Activated CD4-positive, alpha-beta T cell treated with anti-CD3 and anti-CD28 coated beads, Interleukin-2, amount 10 ng/mL, durations not matched to agents 24 days and 14 days (primary cell): ENCODE measurements at regions of chr18 and their contacts with region 1.

Region 1: GRCh38 chr18:54269893-54270844 is 852 bp downstream of the POLI start:
- DNase-seq: peak; percentile 89
- H3K4me3 Mint-ChIP-seq: peak overlapping the region; percentile 85
- H3K27ac Mint-ChIP-seq: peak overlapping the region; percentile 95
- H3K4me1 Mint-ChIP-seq: peaks cover 40% of the 10 kb centered on the region
- H3K27me3 Mint-ChIP-seq: peaks cover 2% of the 10 kb centered on the region

Region 2: GRCh38 chr18:54173980-54174630 is 96.1 kb before region 1 on chr18:
- intact Hi-C with region 1: loop called (anchors 2 kb)
- DNase-seq: peak; percentile 63
- H3K4me3 Mint-ChIP-seq: peak overlapping the region; percentile 39
- H3K27ac Mint-ChIP-seq: peak overlapping the region; percentile 90
- H3K4me1 Mint-ChIP-seq: peaks cover 61% of the 10 kb centered on the region
- H3K27me3 Mint-ChIP-seq: no peaks in the 10 kb centered on the region

Region 3: DNA sequence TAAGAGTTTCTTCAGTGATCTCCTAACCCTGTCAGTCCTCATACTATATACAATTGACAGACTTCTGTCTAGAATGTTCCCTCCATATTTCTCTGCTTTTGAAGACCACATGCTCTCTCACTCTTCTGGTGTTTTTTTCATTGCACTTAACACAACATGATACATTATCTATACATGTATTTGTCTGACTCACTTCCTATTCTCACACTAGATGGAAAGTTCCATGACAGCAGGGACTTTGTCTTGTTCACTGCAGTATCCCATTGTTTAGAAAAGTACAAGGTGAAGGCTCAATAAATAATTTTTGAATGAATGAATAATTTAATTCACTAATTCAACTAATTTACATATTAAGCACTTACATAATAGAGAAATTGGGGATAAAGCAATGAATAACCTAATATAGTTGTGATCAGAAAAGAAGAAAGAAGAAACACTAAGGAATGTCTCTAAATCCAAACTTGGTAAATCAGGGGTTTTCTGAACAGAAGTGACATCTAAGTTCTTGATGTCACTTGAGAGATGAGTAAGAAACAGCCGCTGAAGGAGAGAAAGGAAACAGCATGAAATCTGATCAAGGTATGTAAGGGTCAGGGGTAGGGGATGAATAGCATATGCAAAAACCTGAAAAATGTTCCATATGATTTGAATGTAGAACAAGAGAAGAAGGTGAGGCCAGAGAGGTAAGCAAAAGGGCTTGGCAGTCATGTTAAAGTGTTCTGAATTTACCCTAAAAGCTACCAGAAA is 88.1 kb before region 1 on chr18:
- intact Hi-C with region 1: loop called (anchors 1 kb)
- DNase-seq: no peak
- H3K4me3 Mint-ChIP-seq: no peak overlapping the region
- H3K27ac Mint-ChIP-seq: no peak overlapping the region
- H3K4me1 Mint-ChIP-seq: peaks cover 10% of the 10 kb centered on the region
- H3K27me3 Mint-ChIP-seq: no peaks in the 10 kb centered on the region

Region 4: DNA sequence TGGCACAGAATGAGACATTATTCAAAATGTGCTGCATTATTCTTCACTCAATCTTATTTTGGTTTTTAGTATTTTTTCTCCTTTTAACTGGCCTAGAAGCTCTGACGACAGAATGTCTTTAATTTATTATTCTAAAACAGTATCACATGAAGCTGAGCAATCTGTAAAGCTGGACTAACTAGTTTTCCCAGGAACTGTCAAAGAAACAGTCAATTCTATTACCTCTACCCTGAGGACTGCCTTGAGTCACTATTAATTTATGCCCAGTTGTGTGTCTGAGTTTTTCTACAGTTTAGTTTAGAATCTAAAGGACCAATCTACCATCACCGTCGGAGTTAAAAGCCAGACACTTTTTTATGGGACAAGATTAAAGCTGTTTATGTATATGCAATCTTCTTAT is 77.3 kb before region 1 on chr18:
- intact Hi-C with region 1: no loop called
- DNase-seq: no peak
- H3K4me3 Mint-ChIP-seq: no peak overlapping the region
- H3K27ac Mint-ChIP-seq: no peak overlapping the region
- H3K4me1 Mint-ChIP-seq: peaks cover 14% of the 10 kb centered on the region
- H3K27me3 Mint-ChIP-seq: no peaks in the 10 kb centered on the region

Region 5: GRCh38 chr18:54209471-54210180 is 60.5 kb before region 1 on chr18:
- intact Hi-C with region 1: loop called (anchors 1 kb)
- DNase-seq: no peak
- H3K4me3 Mint-ChIP-seq: peak overlapping the region; percentile 49
- H3K27ac Mint-ChIP-seq: peak overlapping the region; percentile 79
- H3K4me1 Mint-ChIP-seq: peaks cover 50% of the 10 kb centered on the region
- H3K27me3 Mint-ChIP-seq: no peaks in the 10 kb centered on the region

Region 6: DNA sequence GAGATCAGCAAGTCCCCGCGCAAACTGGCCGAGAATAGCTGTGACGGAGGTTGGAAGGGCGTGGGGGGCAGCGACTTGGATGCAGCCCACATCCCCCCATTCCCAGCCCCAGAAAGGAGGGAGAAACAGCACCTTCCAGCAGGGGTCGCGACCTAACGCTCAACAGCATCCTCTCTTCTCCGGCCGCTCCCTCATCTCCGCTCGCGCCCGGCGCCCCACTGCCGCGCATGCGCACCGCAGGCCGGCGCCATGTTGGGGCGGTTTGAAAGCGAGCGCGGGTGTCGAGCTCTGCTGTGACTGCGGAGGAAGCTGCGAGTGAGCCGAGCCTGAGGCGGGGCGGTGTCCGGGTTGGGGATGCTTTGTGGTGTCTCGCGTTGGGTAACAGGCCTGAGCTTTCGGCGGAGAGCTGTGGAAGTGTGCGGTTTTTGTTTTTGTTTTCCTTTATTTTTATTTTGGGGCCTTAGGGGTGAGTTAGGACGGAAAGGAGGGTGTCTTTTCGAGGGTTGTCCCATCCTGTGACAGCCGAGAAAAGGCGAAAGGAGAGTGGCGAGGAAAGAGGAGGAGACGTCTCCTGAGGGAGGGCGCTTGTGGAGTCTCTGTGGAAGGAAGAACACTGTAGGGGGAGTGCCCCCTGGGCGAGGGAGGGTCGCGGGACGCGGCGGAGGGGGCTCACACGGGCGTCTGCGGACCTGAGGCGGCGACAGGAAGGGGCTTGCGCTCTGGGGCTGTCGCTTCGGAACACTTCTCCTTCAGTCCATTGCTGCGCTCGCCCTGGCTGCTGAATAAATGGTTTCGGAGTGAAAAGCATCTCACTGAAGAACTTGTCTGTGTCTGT is 87.7 kb after region 1 on chr18 and contains the starts of genes C18orf54 and STARD6:
- intact Hi-C with region 1: loop called (anchors 2 kb)
- DNase-seq: peak; percentile 98
- H3K4me3 Mint-ChIP-seq: peak within 1 kb of the TSS; percentile 99
- H3K27ac Mint-ChIP-seq: peak within 1 kb of the TSS; percentile 100
- H3K4me1 Mint-ChIP-seq: peaks cover 25% of the 10 kb centered on the region
- H3K27me3 Mint-ChIP-seq: no peaks in the 10 kb centered on the region
- total RNA-seq, gene C18orf54: 10.9 and 12.8 TPM in 2 replicates
- total RNA-seq, gene STARD6: not detected in 2 replicates

Region 7: GRCh38 chr18:54717673-54718407 is 447.7 kb after region 1 on chr18:
- intact Hi-C with region 1: loop called (anchors 10 kb)
- DNase-seq: peak; percentile 88
- H3K4me3 Mint-ChIP-seq: peak overlapping the region; percentile 77
- H3K27ac Mint-ChIP-seq: peak overlapping the region; percentile 15
- H3K4me1 Mint-ChIP-seq: peaks cover 48% of the 10 kb centered on the region
- H3K27me3 Mint-ChIP-seq: peaks cover 29% of the 10 kb centered on the region